ENCODE measurements at regions of chr15 and their contacts with region 1.

Region 1: DNA sequence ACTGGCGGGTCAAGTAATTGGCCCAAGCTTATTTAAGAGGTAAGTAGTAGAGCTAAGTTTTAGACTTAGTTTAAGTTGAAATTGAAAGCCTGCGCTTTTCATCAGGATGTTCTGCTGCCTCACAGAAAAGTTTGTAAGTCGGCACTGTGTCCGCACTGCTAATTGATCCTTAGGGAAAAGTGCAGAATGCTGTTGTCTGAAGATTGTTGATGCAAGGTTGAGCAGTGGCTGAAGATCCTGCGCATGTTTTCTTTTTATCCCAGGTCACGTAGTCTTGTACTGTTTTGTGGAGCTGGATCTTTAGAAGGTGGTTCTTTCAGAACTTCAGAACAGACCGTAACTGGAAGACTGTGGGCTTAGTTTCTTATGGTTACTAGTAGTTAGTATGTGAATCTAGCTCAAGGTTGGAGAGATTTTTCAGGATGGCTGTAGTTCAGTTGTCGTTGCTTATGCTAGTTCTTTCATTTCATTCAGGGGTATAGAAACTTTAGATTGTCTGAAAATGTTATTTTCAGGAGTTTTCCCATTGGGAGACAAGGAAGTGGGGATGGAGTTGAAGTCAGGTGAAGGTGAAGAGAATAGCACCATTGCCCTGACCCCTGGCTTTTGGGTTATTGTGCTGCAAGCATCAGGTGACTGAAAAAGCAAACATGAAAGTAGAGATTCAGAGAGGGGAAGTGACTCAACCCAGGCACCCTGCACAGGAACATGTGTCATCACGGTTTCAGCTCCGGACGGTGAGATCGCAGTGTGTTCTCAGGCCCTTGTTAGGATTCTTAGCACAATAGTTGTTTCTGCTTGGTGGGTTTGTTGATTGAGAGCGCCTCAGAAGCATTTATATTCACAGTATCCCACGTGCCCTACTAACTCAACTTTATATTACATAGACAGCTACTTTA is 32.8 kb downstream of the AKAP13 start:
- DNase-seq: peak; percentile 89
- H3K4me3 Mint-ChIP-seq: peak overlapping the region; percentile 3
- H3K27ac Mint-ChIP-seq: peak overlapping the region; percentile 33
- H3K4me1 Mint-ChIP-seq: peaks cover 75% of the 10 kb centered on the region
- H3K27me3 Mint-ChIP-seq: no peaks in the 10 kb centered on the region

Region 2: GRCh38 chr15:85296615-85297402 is 116.4 kb before region 1 on chr15:
- CTCF ChIA-PET with region 1: interaction called, 28 read pairs
- intact Hi-C with region 1: loop called (anchors 1 kb)
- DNase-seq: peak; percentile 85
- H3K4me3 Mint-ChIP-seq: peak overlapping the region; percentile 51
- H3K27ac Mint-ChIP-seq: no peak overlapping the region
- H3K4me1 Mint-ChIP-seq: peaks cover 10% of the 10 kb centered on the region
- H3K27me3 Mint-ChIP-seq: no peaks in the 10 kb centered on the region

Region 3: GRCh38 chr15:85330901-85331588 is 82.2 kb before region 1 on chr15:
- CTCF ChIA-PET with region 1: interaction called, 6 read pairs
- intact Hi-C with region 1: loop called (anchors 1 kb)
- DNase-seq: peak; percentile 79
- H3K4me3 Mint-ChIP-seq: peak overlapping the region; percentile 85
- H3K27ac Mint-ChIP-seq: peak overlapping the region; percentile 6
- H3K4me1 Mint-ChIP-seq: peaks cover 22% of the 10 kb centered on the region
- H3K27me3 Mint-ChIP-seq: no peaks in the 10 kb centered on the region

Region 4: GRCh38 chr15:85402195-85402881 is 10.9 kb before region 1 on chr15:
- CTCF ChIA-PET with region 1: interaction called, 24 read pairs
- intact Hi-C with region 1: loop called (anchors 1 kb)
- DNase-seq: no peak
- H3K4me3 Mint-ChIP-seq: peak overlapping the region; percentile 26
- H3K27ac Mint-ChIP-seq: peak overlapping the region; percentile 20
- H3K4me1 Mint-ChIP-seq: peaks cover 77% of the 10 kb centered on the region
- H3K27me3 Mint-ChIP-seq: no peaks in the 10 kb centered on the region

Region 5: DNA sequence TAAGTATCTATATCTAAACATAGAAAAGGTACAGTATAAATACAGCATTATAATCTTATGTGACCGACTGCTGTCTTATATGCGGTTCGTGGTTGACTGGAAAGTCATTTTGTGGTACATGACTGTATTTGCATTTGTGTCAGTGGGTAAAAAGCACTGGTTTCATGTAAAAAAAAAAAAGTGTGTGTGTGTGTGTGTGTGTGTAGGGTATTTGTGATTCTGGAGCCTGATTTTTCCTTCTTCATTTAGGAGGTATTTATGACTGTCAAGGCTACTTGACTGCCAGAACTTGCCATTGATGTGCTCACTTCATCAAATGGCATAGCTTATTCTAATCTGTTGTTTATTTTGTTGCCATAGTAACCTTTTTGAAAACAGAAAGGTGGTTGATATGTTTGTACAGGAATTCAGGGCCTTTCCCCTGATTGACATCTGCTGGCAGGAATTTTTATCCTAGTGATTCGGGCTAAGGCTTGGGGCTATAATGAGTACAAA is 30.4 kb after region 1 on chr15:
- CTCF ChIA-PET with region 1: no interaction called
- intact Hi-C with region 1: loop called (anchors 1 kb)
- DNase-seq: peak; percentile 50
- H3K4me3 Mint-ChIP-seq: no peak overlapping the region
- H3K27ac Mint-ChIP-seq: peak overlapping the region; percentile 19
- H3K4me1 Mint-ChIP-seq: peaks cover 48% of the 10 kb centered on the region
- H3K27me3 Mint-ChIP-seq: no peaks in the 10 kb centered on the region

Region 6: DNA sequence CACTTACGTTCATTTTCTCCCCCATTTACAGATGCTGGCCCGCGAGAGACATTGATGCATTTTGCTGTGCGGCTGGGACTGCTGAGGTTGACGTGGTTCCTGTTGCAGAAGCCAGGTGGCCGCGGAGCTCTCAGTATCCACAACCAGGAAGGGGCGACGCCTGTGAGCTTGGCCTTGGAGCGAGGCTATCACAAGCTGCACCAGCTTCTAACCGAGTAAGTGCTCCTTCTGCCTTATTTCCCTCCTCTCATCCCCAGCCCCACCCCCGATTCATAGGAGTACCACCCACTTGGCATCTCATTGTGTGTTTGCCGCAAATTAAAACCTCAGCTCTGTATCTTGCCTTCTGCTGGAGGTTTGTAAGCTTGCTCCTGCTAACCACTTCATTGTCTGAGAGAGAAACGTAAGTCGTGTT is 130.5 kb after region 1 on chr15:
- CTCF ChIA-PET with region 1: no interaction called
- intact Hi-C with region 1: loop called (anchors 2 kb)
- DNase-seq: peak; percentile 62
- H3K4me3 Mint-ChIP-seq: peak overlapping the region; percentile 52
- H3K27ac Mint-ChIP-seq: peak overlapping the region; percentile 62
- H3K4me1 Mint-ChIP-seq: peaks cover 74% of the 10 kb centered on the region
- H3K27me3 Mint-ChIP-seq: no peaks in the 10 kb centered on the region

Region 7: DNA sequence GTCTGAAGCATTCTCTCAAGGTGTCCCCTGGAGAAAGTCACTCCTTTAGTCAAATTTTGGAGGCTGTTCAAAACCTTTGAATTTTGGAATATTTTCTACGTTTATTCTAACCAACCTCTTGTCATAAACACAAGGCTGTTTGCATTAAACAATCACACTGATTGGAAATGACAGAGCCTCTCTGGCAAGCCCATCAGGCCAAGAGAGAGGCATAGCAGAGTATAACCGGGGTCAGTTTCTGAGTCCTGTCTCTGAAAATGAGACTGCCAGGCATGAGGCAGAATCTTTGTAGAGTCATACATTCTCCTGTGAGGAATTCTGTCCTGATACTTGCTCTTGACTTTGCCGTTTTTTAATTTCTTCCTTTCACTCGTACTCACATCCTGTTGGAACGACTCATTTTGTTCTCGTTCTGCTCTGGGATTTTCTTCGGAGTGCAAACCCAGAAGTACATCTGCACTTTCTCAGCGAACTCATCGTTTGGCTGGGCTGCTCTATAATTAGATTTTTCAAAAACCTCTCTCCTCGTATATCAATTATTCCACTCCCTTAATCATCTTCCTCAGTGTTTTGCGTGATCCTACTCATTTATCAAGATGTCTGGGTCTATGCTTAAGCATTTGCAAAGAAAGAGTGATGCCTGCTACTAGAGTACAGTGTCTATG is 780.6 kb after region 1 on chr15:
- CTCF ChIA-PET with region 1: no interaction called
- intact Hi-C with region 1: no loop called
- DNase-seq: no peak
- H3K4me3 Mint-ChIP-seq: no peak overlapping the region
- H3K27ac Mint-ChIP-seq: no peak overlapping the region
- H3K4me1 Mint-ChIP-seq: no peaks in the 10 kb centered on the region
- H3K27me3 Mint-ChIP-seq: peaks cover 5% of the 10 kb centered on the region